Caco-2 (cell line): ENCODE measurements at regions of chr11 and their contacts with region 1.

Region 1: GRCh38 chr11:118791111-118791965 is at the start of gene DDX6:
- DNase-seq: peak; percentile 96 to 98
- H3K4me3 ChIP-seq: peak within 1 kb of the TSS; percentile 63
- H3K4me3 Mint-ChIP-seq: peak within 1 kb of the TSS; percentile 93
- H3K27ac Mint-ChIP-seq: peak within 1 kb of the TSS; percentile 90
- H3K4me1 ChIP-seq: peaks cover 23% of the 10 kb centered on the region
- H3K4me1 Mint-ChIP-seq: peaks cover 23% of the 10 kb centered on the region
- H3K27me3 ChIP-seq: no peaks in the 10 kb centered on the region
- H3K27me3 Mint-ChIP-seq: no peaks in the 10 kb centered on the region
- CTCF ChIP-seq: peak in 1 of 2 experiments; percentile 76
- total RNA-seq, gene DDX6: 131 and 135 TPM in 2 replicates

Region 2: GRCh38 chr11:117717485-117718314 is 1073.6 kb before region 1 on chr11:
- CTCF ChIA-PET with region 1: no interaction called
- POLR2A ChIA-PET with region 1: no interaction called
- intact Hi-C with region 1: no loop called
- DNase-seq: peak; percentile 90 to 95
- H3K4me3 ChIP-seq: peak overlapping the region; percentile 15
- H3K4me3 Mint-ChIP-seq: peak overlapping the region; percentile 75
- H3K27ac Mint-ChIP-seq: peak overlapping the region; percentile 96
- H3K4me1 ChIP-seq: peaks cover 49% of the 10 kb centered on the region
- H3K4me1 Mint-ChIP-seq: peaks cover 45% of the 10 kb centered on the region
- H3K27me3 ChIP-seq: no peaks in the 10 kb centered on the region
- H3K27me3 Mint-ChIP-seq: no peaks in the 10 kb centered on the region
- CTCF ChIP-seq: no peak

Region 3: GRCh38 chr11:118715245-118715831 is 76.0 kb before region 1 on chr11:
- CTCF ChIA-PET with region 1: interaction called, 7 read pairs
- POLR2A ChIA-PET with region 1: interaction called, 3 read pairs
- intact Hi-C with region 1: loop called (anchors 2 kb)
- DNase-seq: peak; percentile 57 to 74
- H3K4me3 ChIP-seq: no peak overlapping the region
- H3K4me3 Mint-ChIP-seq: peak overlapping the region; percentile 13
- H3K27ac Mint-ChIP-seq: peak overlapping the region; percentile 76
- H3K4me1 ChIP-seq: peaks cover 49% of the 10 kb centered on the region
- H3K4me1 Mint-ChIP-seq: peaks cover 50% of the 10 kb centered on the region
- H3K27me3 ChIP-seq: no peaks in the 10 kb centered on the region
- H3K27me3 Mint-ChIP-seq: no peaks in the 10 kb centered on the region
- CTCF ChIP-seq: no peak

Region 4: DNA sequence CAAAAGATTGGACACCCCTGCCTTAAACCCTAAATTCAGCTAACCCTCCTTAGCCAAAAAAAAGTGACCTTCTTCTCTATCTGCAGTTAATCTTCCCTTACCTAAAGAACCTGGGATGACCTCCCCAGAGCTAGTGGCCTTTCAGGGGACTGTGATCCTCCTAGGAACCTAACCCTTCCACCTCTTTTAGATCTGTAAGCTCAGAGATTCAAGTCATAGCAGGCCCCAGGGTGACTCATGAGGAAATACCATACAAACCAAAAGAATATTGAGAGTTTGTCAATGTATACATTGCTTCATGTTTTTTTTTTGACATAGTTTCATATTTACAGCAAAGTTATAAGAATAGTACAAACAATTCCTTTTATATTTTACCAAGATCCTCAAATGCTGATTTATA is 54.0 kb after region 1 on chr11:
- CTCF ChIA-PET with region 1: interaction called, 22 read pairs
- POLR2A ChIA-PET with region 1: interaction called, 18 read pairs
- intact Hi-C with region 1: loop called (anchors 2 kb)
- DNase-seq: no peak
- H3K4me3 ChIP-seq: no peak overlapping the region
- H3K4me3 Mint-ChIP-seq: peak overlapping the region; percentile 17
- H3K27ac Mint-ChIP-seq: peak overlapping the region; percentile 69
- H3K4me1 ChIP-seq: peaks cover 16% of the 10 kb centered on the region
- H3K4me1 Mint-ChIP-seq: peaks cover 23% of the 10 kb centered on the region
- H3K27me3 ChIP-seq: no peaks in the 10 kb centered on the region
- H3K27me3 Mint-ChIP-seq: no peaks in the 10 kb centered on the region
- CTCF ChIP-seq: no peak

Region 5: GRCh38 chr11:118895142-118896039 is 104.1 kb after region 1 on chr11:
- CTCF ChIA-PET with region 1: interaction called, 13 read pairs
- POLR2A ChIA-PET with region 1: interaction called, 4 read pairs
- intact Hi-C with region 1: loop called (anchors 5 kb)
- DNase-seq: peak; percentile 62 to 67
- H3K4me3 ChIP-seq: no peak overlapping the region
- H3K4me3 Mint-ChIP-seq: peak overlapping the region; percentile 3
- H3K27ac Mint-ChIP-seq: peak overlapping the region; percentile 70
- H3K4me1 ChIP-seq: 0 out of 2 replicates have a peak, but pooled peaks cover 3% of the 10 kb centered on the region
- H3K4me1 Mint-ChIP-seq: peaks cover 17% of the 10 kb centered on the region
- H3K27me3 ChIP-seq: no peaks in the 10 kb centered on the region
- H3K27me3 Mint-ChIP-seq: no peaks in the 10 kb centered on the region
- CTCF ChIP-seq: no peak

Region 6: GRCh38 chr11:118956094-118956846 is 164.9 kb after region 1 on chr11 and contains the start of gene UPK2:
- CTCF ChIA-PET with region 1: interaction called, 5 read pairs
- POLR2A ChIA-PET with region 1: interaction called, 6 read pairs
- intact Hi-C with region 1: loop called (anchors 1 kb)
- DNase-seq: peak; percentile 93 to 96
- H3K4me3 ChIP-seq: no peak within 1 kb of the TSS
- H3K4me3 Mint-ChIP-seq: peak within 1 kb of the TSS; percentile 5
- H3K27ac Mint-ChIP-seq: peak within 1 kb of the TSS; percentile 34
- H3K4me1 ChIP-seq: peaks cover 15% of the 10 kb centered on the region
- H3K4me1 Mint-ChIP-seq: peaks cover 15% of the 10 kb centered on the region
- H3K27me3 ChIP-seq: no peaks in the 10 kb centered on the region
- H3K27me3 Mint-ChIP-seq: peaks cover 2% of the 10 kb centered on the region
- CTCF ChIP-seq: peak; percentile 99 to 100
- total RNA-seq, gene UPK2: 1.8 and 3.5 TPM in 2 replicates

Region 7: GRCh38 chr11:119115484-119116234 is 324.3 kb after region 1 on chr11:
- CTCF ChIA-PET with region 1: no interaction called
- POLR2A ChIA-PET with region 1: no interaction called
- intact Hi-C with region 1: no loop called
- DNase-seq: no peak
- H3K4me3 ChIP-seq: no peak overlapping the region
- H3K4me3 Mint-ChIP-seq: no peak overlapping the region
- H3K27ac Mint-ChIP-seq: no peak overlapping the region
- H3K4me1 ChIP-seq: 0 out of 2 replicates have a peak, but pooled peaks cover 4% of the 10 kb centered on the region
- H3K4me1 Mint-ChIP-seq: peaks cover 7% of the 10 kb centered on the region
- H3K27me3 ChIP-seq: no peaks in the 10 kb centered on the region
- H3K27me3 Mint-ChIP-seq: no peaks in the 10 kb centered on the region
- CTCF ChIP-seq: no peak